Motor neuron (in vitro differentiated cells): ENCODE measurements at regions of chr13 and their contacts with region 1.

Region 1: GRCh38 chr13:85806553-85807175 is 7.4 kb upstream of the SLITRK6 start:
- ATAC-seq: peak in 7 of 8 experiments; percentile 49 to 81 (median 64)
- H3K4me3 ChIP-seq: no peak overlapping the region
- H3K27ac ChIP-seq: no peak overlapping the region
- H3K4me1 ChIP-seq: no peaks in the 10 kb centered on the region

Region 2: GRCh38 chr13:84917252-84917878 is 889.3 kb before region 1 on chr13:
- in situ Hi-C with region 1: loop called in 8 of 9 experiments (anchors 10 to 25 kb)
- ATAC-seq: peak in 1 of 8 experiments; percentile 56
- H3K4me3 ChIP-seq: no peak overlapping the region
- H3K27ac ChIP-seq: no peak overlapping the region
- H3K4me1 ChIP-seq: no peaks in the 10 kb centered on the region